Astrocyte of the cerebellum (primary cell): ENCODE measurements at regions of chr3 and their contacts with region 1.

Region 1: GRCh38 chr3:146544002-146544928 is at the start of gene PLSCR1:
- DNase-seq: peak; percentile 80
- H3K4me3 ChIP-seq: peak within 1 kb of the TSS; percentile 87
- CTCF ChIP-seq: no peak

Region 2: GRCh38 chr3:146498002-146498736 is 46.1 kb before region 1 on chr3:
- in situ Hi-C with region 1: loop called (anchors 5 kb)
- DNase-seq: no peak
- H3K4me3 ChIP-seq: no peak overlapping the region
- CTCF ChIP-seq: no peak